Left ventricle myocardium inferior (tissue), 1 donor: ENCODE measurements at regions of chr6 and their contacts with region 1.

Region 1: DNA sequence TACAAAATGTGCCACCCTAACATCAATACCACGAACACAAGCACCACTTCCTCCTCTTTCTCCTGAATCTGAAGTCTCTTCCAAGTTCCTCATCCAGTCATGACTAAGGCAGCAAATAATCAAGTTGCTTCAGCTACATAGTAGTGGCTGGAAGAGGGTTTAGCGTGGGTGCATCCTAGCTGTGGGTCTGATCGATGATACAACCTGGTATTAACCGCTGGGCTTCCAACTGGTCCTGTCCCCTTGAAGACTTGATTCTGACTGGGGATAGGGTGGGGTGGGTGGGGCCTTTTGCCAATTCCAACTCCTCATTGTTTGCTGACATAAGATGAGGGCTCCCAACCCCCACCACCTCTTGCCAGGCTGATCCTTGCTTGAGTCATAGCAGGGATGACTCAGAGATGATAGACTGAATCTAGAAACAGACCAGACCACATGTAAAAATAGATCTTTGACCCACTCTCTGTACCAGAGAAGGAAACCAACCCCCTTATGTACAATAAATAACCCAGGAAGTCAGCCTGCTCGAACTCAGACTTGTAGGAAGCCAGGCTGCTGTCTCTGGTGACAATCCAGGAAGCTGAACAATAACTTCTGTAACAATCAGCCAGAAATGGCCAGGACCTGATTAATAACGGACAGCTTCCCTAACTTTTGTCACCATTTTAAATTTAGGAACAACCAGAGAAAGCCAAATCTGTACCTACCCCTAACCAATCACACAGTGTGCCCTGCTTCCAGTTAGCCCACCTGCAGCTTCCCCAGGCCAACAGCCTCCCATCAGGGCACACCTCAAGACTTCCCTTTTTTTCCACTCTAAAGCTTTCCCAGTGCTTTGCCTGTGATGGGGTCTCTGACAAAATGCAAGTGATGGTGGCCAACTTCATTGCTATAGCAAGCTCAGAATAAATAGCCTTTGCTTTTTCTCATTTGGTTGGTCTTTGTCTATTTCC is 68.9 kb upstream of the FAM184A start:
- DNase-seq: no peak
- H3K4me3 ChIP-seq: no peak overlapping the region
- H3K27ac ChIP-seq: no peak overlapping the region
- H3K4me1 ChIP-seq: peaks cover 24% of the 10 kb centered on the region
- H3K27me3 ChIP-seq: no peaks in the 10 kb centered on the region
- CTCF ChIP-seq: no peak

Region 2: GRCh38 chr6:119349323-119350042 is 202.1 kb after region 1 on chr6 and contains the start of gene MAN1A1:
- intact Hi-C with region 1: loop called (anchors 10 kb)
- DNase-seq: peak; percentile 92
- H3K4me3 ChIP-seq: peak within 1 kb of the TSS; percentile 94
- H3K27ac ChIP-seq: peak within 1 kb of the TSS; percentile 96
- H3K4me1 ChIP-seq: peaks cover 69% of the 10 kb centered on the region
- H3K27me3 ChIP-seq: no peaks in the 10 kb centered on the region
- CTCF ChIP-seq: peak; percentile 24
- total RNA-seq, gene MAN1A1: 19.7 TPM